Mammary epithelial cell (primary cell): ENCODE measurements at regions of chr5 and their contacts with region 1.

Region 1: GRCh38 chr5:137665678-137666460 is 70.0 kb downstream of the KLHL3 start:
- DNase-seq: no peak
- H3K4me3 ChIP-seq: no peak overlapping the region
- H3K27ac ChIP-seq: no peak overlapping the region
- H3K4me1 ChIP-seq: peaks cover 4% of the 10 kb centered on the region
- H3K27me3 ChIP-seq: no peaks in the 10 kb centered on the region
- CTCF ChIP-seq: no peak

Region 2: DNA sequence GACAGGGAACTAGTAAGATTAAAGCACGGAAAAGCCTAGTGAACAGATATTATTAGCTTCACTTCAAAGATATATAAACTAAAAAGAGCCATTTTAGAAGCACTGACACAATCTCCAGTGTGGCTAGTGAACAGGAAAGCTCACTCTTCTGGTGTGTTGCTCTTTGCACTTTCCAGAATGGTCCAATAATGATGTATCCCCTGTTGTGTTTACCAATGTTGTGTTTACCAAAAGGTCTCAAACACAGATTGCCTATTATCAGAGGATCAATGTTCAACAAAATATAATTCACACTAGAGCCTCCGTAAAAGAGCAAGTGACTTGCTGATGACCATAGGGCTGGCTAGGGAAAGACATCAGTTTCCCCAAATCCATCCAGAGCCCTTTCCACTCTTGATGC is 58.4 kb after region 1 on chr5:
- CTCF ChIA-PET with region 1: no interaction called
- dilution Hi-C with region 1: loop called (anchors 5 kb)
- in situ Hi-C with region 1: no loop called
- intact Hi-C with region 1: no loop called
- DNase-seq: no peak
- H3K4me3 ChIP-seq: no peak overlapping the region
- H3K27ac ChIP-seq: no peak overlapping the region
- H3K4me1 ChIP-seq: no peaks in the 10 kb centered on the region
- H3K27me3 ChIP-seq: no peaks in the 10 kb centered on the region
- CTCF ChIP-seq: no peak